ENCODE measurements at regions of chr3 and their contacts with region 1.

Region 1: GRCh38 chr3:104628185-104628789 is 738.4 kb upstream of the ALCAM start:
- DNase-seq: peak; percentile 55
- H3K4me3 ChIP-seq: no peak overlapping the region
- H3K27ac ChIP-seq: peak overlapping the region; percentile 69
- H3K4me1 ChIP-seq: peaks cover 20% of the 10 kb centered on the region
- H3K27me3 ChIP-seq: no peaks in the 10 kb centered on the region
- CTCF ChIP-seq: peak; percentile 76 to 84

Region 2: GRCh38 chr3:104987859-104988258 is 359.6 kb after region 1 on chr3:
- CTCF ChIA-PET with region 1: no interaction called
- dilution Hi-C with region 1: no loop called
- in situ Hi-C with region 1: no loop called
- intact Hi-C with region 1: loop called (anchors 10 kb)
- DNase-seq: no peak
- H3K4me3 ChIP-seq: no peak overlapping the region
- H3K27ac ChIP-seq: no peak overlapping the region
- H3K4me1 ChIP-seq: no peaks in the 10 kb centered on the region
- H3K27me3 ChIP-seq: no peaks in the 10 kb centered on the region
- CTCF ChIP-seq: peak; percentile 10 to 21

Measured in mammary epithelial cell (primary cell).